Activated CD8-positive, alpha-beta T cell treated with anti-CD3 and anti-CD28 coated beads for 36 hours (primary cell): ENCODE measurements at regions of chr6 and their contacts with region 1.

Region 1: GRCh38 chr6:111210194-111210728 is 123.0 kb downstream of the SLC16A10 start:
- DNase-seq: peak; percentile 12
- ATAC-seq: peak; percentile 94
- H3K4me3 Mint-ChIP-seq: no peak overlapping the region
- H3K27ac Mint-ChIP-seq: no peak overlapping the region
- H3K4me1 Mint-ChIP-seq: no peaks in the 10 kb centered on the region
- H3K27me3 Mint-ChIP-seq: no peaks in the 10 kb centered on the region
- CTCF ChIP-seq: peak; percentile 81

Region 2: DNA sequence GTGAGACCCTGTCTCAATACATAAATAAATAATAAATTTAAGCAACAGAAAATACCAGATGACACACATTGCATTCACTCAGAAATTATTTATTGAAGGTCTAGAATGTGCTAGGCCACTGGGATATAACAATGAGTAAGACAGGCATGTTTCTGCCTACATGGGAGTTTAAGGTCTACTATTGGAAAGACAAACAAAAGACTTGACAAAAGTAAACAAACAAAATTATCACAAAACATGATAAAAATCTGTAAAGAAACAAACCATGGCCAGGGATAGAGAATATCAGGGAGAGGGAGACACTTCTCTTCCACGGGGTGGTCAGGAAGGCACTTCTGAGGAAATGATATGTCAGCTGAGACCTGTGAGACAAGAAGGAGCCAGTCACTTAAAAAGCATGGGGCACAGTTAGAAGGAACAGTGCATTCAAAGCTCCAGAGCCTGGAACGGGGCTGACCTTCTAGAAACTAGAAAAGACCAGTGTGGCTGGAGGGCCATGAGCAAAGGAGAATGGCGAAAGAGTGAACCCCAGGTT is 158.2 kb before region 1 on chr6:
- CTCF ChIA-PET with region 1: interaction called, 75 read pairs
- POLR2A ChIA-PET with region 1: no interaction called
- intact Hi-C with region 1: loop called (anchors 1 kb)
- DNase-seq: no peak
- ATAC-seq: no peak
- H3K4me3 Mint-ChIP-seq: no peak overlapping the region
- H3K27ac Mint-ChIP-seq: no peak overlapping the region
- H3K4me1 Mint-ChIP-seq: no peaks in the 10 kb centered on the region
- H3K27me3 Mint-ChIP-seq: no peaks in the 10 kb centered on the region
- CTCF ChIP-seq: no peak

Region 3: GRCh38 chr6:111220383-111221031 is 10.2 kb after region 1 on chr6:
- CTCF ChIA-PET with region 1: interaction called, 13 read pairs
- POLR2A ChIA-PET with region 1: interaction called, 3 read pairs
- intact Hi-C with region 1: no loop called
- DNase-seq: no peak
- ATAC-seq: no peak
- H3K4me3 Mint-ChIP-seq: no peak overlapping the region
- H3K27ac Mint-ChIP-seq: no peak overlapping the region
- H3K4me1 Mint-ChIP-seq: peaks cover 9% of the 10 kb centered on the region
- H3K27me3 Mint-ChIP-seq: no peaks in the 10 kb centered on the region
- CTCF ChIP-seq: no peak

Region 4: GRCh38 chr6:111276338-111277119 is 66.3 kb after region 1 on chr6:
- CTCF ChIA-PET with region 1: no interaction called
- POLR2A ChIA-PET with region 1: no interaction called
- intact Hi-C with region 1: no loop called
- DNase-seq: no peak
- ATAC-seq: no peak
- H3K4me3 Mint-ChIP-seq: no peak overlapping the region
- H3K27ac Mint-ChIP-seq: no peak overlapping the region
- H3K4me1 Mint-ChIP-seq: peaks cover 7% of the 10 kb centered on the region
- H3K27me3 Mint-ChIP-seq: no peaks in the 10 kb centered on the region
- CTCF ChIP-seq: no peak